ENCODE measurements at regions of chr3 and their contacts with region 1.

Region 1: DNA sequence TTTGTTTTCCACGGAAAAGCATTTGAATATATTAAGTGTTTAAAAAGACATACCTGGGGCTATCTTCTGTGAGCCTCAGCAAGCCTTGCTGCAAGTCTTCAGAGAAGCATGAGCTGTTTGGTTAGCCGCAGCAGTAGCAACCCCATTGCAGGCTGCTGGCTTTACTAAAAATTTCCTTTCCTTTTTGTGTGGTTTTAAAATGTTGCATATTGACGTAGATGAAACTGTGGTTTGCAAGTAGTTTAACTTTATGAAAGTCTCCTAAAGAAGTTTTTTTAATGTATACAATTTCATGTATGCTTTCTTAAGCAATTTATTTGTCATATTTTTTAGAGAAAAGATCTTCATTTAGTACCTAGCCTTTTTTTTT is at the start of gene GPR171:
- DNase-seq: peak; percentile 81
- H3K4me3 Mint-ChIP-seq: peak within 1 kb of the TSS; percentile 94
- H3K27ac Mint-ChIP-seq: peak within 1 kb of the TSS; percentile 100
- H3K4me1 Mint-ChIP-seq: peaks cover 60% of the 10 kb centered on the region
- H3K27me3 Mint-ChIP-seq: no peaks in the 10 kb centered on the region
- total RNA-seq, gene GPR171: 42.8 to 46.9 TPM

Region 2: DNA sequence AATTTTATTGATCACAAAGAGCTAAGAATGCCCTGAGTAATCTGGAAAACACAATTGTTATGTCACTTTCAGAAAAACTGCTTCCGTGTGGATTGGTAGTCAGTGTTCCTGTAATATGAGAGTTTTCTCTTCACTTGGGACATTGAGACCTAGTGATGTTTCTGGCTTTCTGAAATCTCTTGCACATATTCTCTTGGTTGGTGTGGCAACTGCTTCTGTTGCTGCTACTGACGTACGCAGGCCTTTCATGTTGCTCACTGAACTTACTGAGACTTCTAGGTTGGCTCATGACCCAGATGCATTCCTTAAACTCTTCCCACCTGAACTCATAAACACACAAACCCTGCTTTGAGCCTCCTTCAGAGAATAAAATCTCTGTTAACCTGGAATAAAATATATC is 1057.4 kb before region 1 on chr3:
- CTCF ChIA-PET with region 1: no interaction called
- intact Hi-C with region 1: no loop called
- DNase-seq: no peak
- H3K4me3 Mint-ChIP-seq: no peak overlapping the region
- H3K27ac Mint-ChIP-seq: no peak overlapping the region
- H3K4me1 Mint-ChIP-seq: no peaks in the 10 kb centered on the region
- H3K27me3 Mint-ChIP-seq: peaks cover 6% of the 10 kb centered on the region

Region 3: GRCh38 chr3:150603153-150603979 is 599.7 kb before region 1 on chr3 and contains the start of gene SELENOT:
- CTCF ChIA-PET with region 1: no interaction called
- intact Hi-C with region 1: loop called (anchors 5 kb)
- DNase-seq: peak; percentile 93
- H3K4me3 Mint-ChIP-seq: peak within 1 kb of the TSS; percentile 96
- H3K27ac Mint-ChIP-seq: peak within 1 kb of the TSS; percentile 97
- H3K4me1 Mint-ChIP-seq: peaks cover 59% of the 10 kb centered on the region
- H3K27me3 Mint-ChIP-seq: no peaks in the 10 kb centered on the region
- total RNA-seq, gene SELENOT: 68.4 to 71.2 TPM

Region 4: DNA sequence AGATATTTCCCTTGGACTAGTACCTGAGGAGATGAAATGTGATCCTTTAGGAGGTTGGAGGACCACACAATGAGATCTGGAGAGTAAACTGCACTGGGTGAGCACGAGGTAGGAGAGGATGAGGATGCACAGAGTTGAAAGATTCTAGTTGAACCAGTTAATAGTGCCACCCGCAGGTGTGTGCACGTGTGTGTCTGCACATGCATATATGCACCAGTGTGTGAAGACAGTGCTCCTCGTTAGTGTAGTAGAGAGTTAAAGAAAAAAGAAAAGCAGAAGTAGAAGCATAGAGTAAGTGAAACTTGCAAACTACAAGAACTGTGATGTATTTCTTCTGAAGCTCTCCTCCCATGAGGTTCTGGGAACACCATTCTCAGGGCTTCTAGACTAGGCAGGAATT is 109.1 kb before region 1 on chr3:
- CTCF ChIA-PET with region 1: no interaction called
- intact Hi-C with region 1: no loop called
- DNase-seq: no peak
- H3K4me3 Mint-ChIP-seq: no peak overlapping the region
- H3K27ac Mint-ChIP-seq: no peak overlapping the region
- H3K4me1 Mint-ChIP-seq: no peaks in the 10 kb centered on the region
- H3K27me3 Mint-ChIP-seq: peaks cover 21% of the 10 kb centered on the region

Region 5: DNA sequence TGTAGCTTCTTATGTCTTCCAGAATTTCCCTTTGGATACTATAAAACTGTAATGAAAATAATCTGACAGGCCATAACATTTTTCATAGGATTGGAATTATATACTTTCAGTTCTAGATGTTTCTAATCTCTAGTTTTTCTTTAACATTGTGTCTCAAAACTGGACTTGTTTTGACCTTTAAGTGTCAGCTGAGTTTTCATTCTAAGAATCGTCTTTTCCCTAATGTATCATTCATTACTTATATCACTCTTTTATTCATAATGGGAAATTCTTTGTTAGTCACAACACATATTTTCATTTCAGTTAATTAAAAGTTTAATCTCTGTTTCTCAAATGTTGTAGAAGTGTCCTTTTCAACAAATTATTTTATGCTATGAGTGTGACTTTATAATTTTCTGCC is 11.9 kb before region 1 on chr3:
- CTCF ChIA-PET with region 1: interaction called, 11 read pairs
- intact Hi-C with region 1: loop called (anchors 1 kb)
- DNase-seq: no peak
- H3K4me3 Mint-ChIP-seq: peak overlapping the region; percentile 41
- H3K27ac Mint-ChIP-seq: peak overlapping the region; percentile 93
- H3K4me1 Mint-ChIP-seq: peaks cover 68% of the 10 kb centered on the region
- H3K27me3 Mint-ChIP-seq: no peaks in the 10 kb centered on the region

Region 6: GRCh38 chr3:151425627-151426335 is 222.7 kb after region 1 on chr3:
- CTCF ChIA-PET with region 1: no interaction called
- intact Hi-C with region 1: no loop called
- DNase-seq: no peak
- H3K4me3 Mint-ChIP-seq: no peak overlapping the region
- H3K27ac Mint-ChIP-seq: no peak overlapping the region
- H3K4me1 Mint-ChIP-seq: no peaks in the 10 kb centered on the region
- H3K27me3 Mint-ChIP-seq: peaks cover 2% of the 10 kb centered on the region

Region 7: DNA sequence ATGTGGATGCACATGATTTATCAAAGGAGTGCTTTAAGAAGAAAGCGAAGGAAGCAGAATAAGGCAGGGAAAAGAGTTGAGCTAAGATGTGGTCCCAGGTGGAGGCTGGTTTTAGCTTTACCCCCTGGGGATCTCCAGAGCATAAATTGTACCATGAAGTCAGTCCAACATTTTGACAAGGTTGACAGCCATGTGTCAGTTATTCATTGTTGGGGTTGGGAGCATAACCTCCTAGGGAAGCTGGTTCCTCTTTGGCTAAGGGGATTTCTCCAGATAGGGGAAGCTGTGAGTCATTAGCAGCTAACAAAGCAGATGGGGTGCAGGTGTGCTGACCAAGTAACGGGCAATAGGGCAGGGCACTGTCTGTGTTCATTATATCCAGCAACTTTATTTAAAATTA is 381.5 kb after region 1 on chr3:
- CTCF ChIA-PET with region 1: no interaction called
- intact Hi-C with region 1: no loop called
- DNase-seq: no peak
- H3K4me3 Mint-ChIP-seq: no peak overlapping the region
- H3K27ac Mint-ChIP-seq: no peak overlapping the region
- H3K4me1 Mint-ChIP-seq: no peaks in the 10 kb centered on the region
- H3K27me3 Mint-ChIP-seq: no peaks in the 10 kb centered on the region

Region 8: DNA sequence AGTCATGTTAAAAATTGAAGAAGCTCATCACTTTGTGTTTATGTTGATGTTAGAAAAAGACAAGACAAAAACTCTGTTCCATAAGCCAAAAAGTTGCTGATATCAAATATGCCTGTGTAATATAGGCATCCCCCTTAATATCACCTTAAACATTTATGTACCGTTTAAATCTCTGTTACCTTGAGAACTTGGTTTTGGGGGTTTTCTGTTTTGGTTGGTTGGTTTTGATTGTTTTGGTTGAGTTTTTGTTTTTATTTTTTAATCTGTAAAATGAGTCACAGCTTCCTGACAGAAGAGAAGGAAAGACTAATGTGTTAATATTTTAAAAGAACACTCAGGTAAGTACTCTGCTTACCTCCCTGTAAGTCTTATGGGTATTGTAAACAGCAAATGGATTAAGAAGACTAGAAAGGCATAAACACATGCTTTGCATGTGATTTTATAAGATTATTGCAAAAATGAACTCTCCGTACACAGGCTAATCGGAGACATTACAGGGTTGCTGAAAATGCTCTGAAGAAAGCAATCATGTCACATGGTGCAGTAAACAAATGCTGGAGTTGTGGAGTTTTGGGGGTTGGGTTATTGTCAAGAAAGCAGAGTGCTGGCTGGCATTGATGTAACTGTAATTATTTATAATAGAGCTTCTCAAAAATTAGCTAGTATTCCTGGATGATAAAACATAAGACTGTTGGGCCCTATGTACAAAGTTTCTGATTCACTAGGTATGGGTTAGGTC is 996.2 kb after region 1 on chr3:
- CTCF ChIA-PET with region 1: no interaction called
- intact Hi-C with region 1: loop called (anchors 2 kb)
- DNase-seq: no peak
- H3K4me3 Mint-ChIP-seq: peak overlapping the region; percentile 75
- H3K27ac Mint-ChIP-seq: peak overlapping the region; percentile 99
- H3K4me1 Mint-ChIP-seq: peaks cover 69% of the 10 kb centered on the region
- H3K27me3 Mint-ChIP-seq: no peaks in the 10 kb centered on the region

Region 9: DNA sequence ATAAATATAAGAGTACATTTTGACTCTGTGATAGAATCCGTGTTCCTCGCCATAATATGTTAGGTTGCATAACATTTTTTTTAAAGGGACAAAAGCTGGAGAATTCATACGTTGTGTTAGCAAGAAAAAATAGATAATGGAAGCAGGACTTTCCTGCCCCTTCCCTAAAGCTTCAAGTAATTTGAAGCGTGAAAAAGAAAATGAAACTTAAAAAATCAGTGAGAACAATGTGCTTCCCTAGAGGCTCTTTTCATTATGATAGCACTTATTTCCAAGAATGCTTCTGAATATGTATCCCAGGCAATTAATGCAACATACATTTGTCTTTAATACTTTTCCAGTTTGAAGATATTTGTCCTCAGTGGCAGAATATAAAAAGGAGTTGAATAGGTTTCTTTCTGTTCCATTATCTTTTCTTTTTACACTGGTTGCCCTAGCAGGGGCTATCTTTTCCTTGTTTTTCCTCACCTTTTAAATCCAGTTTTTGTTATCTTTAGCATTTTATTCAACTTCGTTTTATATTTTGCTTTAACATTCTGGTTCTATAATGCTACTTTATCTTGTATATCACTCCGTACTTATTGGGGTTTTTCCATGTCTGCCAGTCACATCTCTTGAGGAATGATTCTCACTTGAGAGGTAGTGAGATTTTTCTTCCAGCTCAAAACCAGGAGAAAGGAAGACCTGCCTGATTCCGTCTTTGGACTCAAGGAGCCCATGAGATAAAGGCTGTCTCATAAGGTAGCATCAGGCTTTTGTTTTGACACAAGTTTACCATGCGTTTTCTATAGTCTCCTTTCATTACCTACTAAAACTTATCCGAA is 1179.5 kb after region 1 on chr3:
- CTCF ChIA-PET with region 1: no interaction called
- intact Hi-C with region 1: loop called (anchors 5 kb)
- DNase-seq: no peak
- H3K4me3 Mint-ChIP-seq: peak overlapping the region; percentile 71
- H3K27ac Mint-ChIP-seq: peak overlapping the region; percentile 89
- H3K4me1 Mint-ChIP-seq: peaks cover 77% of the 10 kb centered on the region
- H3K27me3 Mint-ChIP-seq: no peaks in the 10 kb centered on the region

Measured in activated naive CD4-positive, alpha-beta T cell treated with anti-CD3 and anti-CD28 coated beads for 36 hours (primary cell).